ENCODE measurements at regions of chr20 and their contacts with region 1.

Region 1: GRCh38 chr20:25669826-25670422 is 26.7 kb downstream of the ZNF337 start:
- DNase-seq: peak; percentile 82
- H3K4me3 Mint-ChIP-seq: peak overlapping the region; percentile 22
- H3K27ac Mint-ChIP-seq: peak overlapping the region; percentile 59
- H3K4me1 Mint-ChIP-seq: peaks cover 17% of the 10 kb centered on the region
- H3K27me3 Mint-ChIP-seq: no peaks in the 10 kb centered on the region
- CTCF ChIP-seq: peak; percentile 26

Region 2: GRCh38 chr20:25382704-25383565 is 287.0 kb before region 1 on chr20:
- CTCF ChIA-PET with region 1: no interaction called
- POLR2A ChIA-PET with region 1: no interaction called
- intact Hi-C with region 1: no loop called
- DNase-seq: no peak
- H3K4me3 Mint-ChIP-seq: no peak overlapping the region
- H3K27ac Mint-ChIP-seq: no peak overlapping the region
- H3K4me1 Mint-ChIP-seq: peaks cover 17% of the 10 kb centered on the region
- H3K27me3 Mint-ChIP-seq: no peaks in the 10 kb centered on the region
- CTCF ChIP-seq: no peak

Region 3: GRCh38 chr20:25623736-25624499 is 46.0 kb before region 1 on chr20 and contains the start of gene NANP:
- CTCF ChIA-PET with region 1: no interaction called
- POLR2A ChIA-PET with region 1: interaction called, 14 read pairs
- intact Hi-C with region 1: loop called (anchors 2 kb)
- DNase-seq: peak; percentile 98
- H3K4me3 Mint-ChIP-seq: peak within 1 kb of the TSS; percentile 78
- H3K27ac Mint-ChIP-seq: peak within 1 kb of the TSS; percentile 73
- H3K4me1 Mint-ChIP-seq: peaks cover 20% of the 10 kb centered on the region
- H3K27me3 Mint-ChIP-seq: no peaks in the 10 kb centered on the region
- CTCF ChIP-seq: no peak
- total RNA-seq, gene NANP: 5.2 and 5.7 TPM in 2 replicates

Region 4: GRCh38 chr20:25654487-25654886 is 15.4 kb before region 1 on chr20:
- CTCF ChIA-PET with region 1: interaction called, 3 read pairs
- POLR2A ChIA-PET with region 1: interaction called, 16 read pairs
- intact Hi-C with region 1: no loop called
- DNase-seq: peak; percentile 72
- H3K4me3 Mint-ChIP-seq: no peak overlapping the region
- H3K27ac Mint-ChIP-seq: peak overlapping the region; percentile 20
- H3K4me1 Mint-ChIP-seq: no peaks in the 10 kb centered on the region
- H3K27me3 Mint-ChIP-seq: no peaks in the 10 kb centered on the region
- CTCF ChIP-seq: no peak

Region 5: GRCh38 chr20:25690427-25690826 is 20.5 kb after region 1 on chr20:
- CTCF ChIA-PET with region 1: no interaction called
- POLR2A ChIA-PET with region 1: interaction called, 10 read pairs
- intact Hi-C with region 1: no loop called
- DNase-seq: no peak
- H3K4me3 Mint-ChIP-seq: no peak overlapping the region
- H3K27ac Mint-ChIP-seq: no peak overlapping the region
- H3K4me1 Mint-ChIP-seq: peaks cover 8% of the 10 kb centered on the region
- H3K27me3 Mint-ChIP-seq: no peaks in the 10 kb centered on the region
- CTCF ChIP-seq: no peak

Region 6: GRCh38 chr20:25848222-25848621 is 178.3 kb after region 1 on chr20:
- CTCF ChIA-PET with region 1: no interaction called
- POLR2A ChIA-PET with region 1: no interaction called
- intact Hi-C with region 1: no loop called
- DNase-seq: no peak
- H3K4me3 Mint-ChIP-seq: no peak overlapping the region
- H3K27ac Mint-ChIP-seq: no peak overlapping the region
- H3K4me1 Mint-ChIP-seq: peaks cover 6% of the 10 kb centered on the region
- H3K27me3 Mint-ChIP-seq: no peaks in the 10 kb centered on the region
- CTCF ChIP-seq: no peak